AG04450 (cell line): ENCODE measurements at regions of chr21 and their contacts with region 1.

Region 1: DNA sequence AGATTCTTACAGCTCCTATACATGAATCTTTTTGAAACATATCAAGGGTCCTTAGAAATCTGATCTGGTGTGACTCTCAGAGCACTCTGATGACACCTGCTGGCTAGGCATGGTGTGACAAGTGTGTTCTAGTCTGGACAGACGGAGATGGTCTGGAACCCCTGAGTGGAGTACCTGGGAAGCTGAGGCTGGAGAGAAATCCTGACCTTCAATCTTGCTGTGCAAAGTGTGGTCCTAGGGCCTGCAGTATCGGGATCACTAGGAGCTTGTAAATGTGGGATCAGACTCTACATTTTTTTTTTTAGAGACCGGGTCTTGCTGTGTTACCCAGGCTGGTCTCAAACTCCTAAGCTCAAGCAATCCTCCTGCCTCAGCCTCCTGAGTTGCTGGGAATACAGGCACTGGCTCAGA is 78.6 kb upstream of the SOD1 start:
- DNase-seq: peak; percentile 24
- H3K4me3 ChIP-seq: no peak overlapping the region
- H3K27ac ChIP-seq: no peak overlapping the region
- H3K27me3 ChIP-seq: peaks cover 2% of the 10 kb centered on the region
- CTCF ChIP-seq: peak; percentile 90

Region 2: GRCh38 chr21:31180256-31181081 is 400.4 kb before region 1 on chr21:
- CTCF ChIA-PET with region 1: interaction called, 27 read pairs
- POLR2A ChIA-PET with region 1: no interaction called
- DNase-seq: no peak
- H3K4me3 ChIP-seq: no peak overlapping the region
- H3K27ac ChIP-seq: no peak overlapping the region
- H3K27me3 ChIP-seq: no peaks in the 10 kb centered on the region
- CTCF ChIP-seq: peak; percentile 72

Region 3: GRCh38 chr21:31213795-31214194 is 367.1 kb before region 1 on chr21:
- CTCF ChIA-PET with region 1: interaction called, 15 read pairs
- POLR2A ChIA-PET with region 1: no interaction called
- DNase-seq: no peak
- H3K4me3 ChIP-seq: no peak overlapping the region
- H3K27ac ChIP-seq: no peak overlapping the region
- H3K27me3 ChIP-seq: no peaks in the 10 kb centered on the region
- CTCF ChIP-seq: peak; percentile 23; the same call in 1 of the 2 replicates

Region 4: DNA sequence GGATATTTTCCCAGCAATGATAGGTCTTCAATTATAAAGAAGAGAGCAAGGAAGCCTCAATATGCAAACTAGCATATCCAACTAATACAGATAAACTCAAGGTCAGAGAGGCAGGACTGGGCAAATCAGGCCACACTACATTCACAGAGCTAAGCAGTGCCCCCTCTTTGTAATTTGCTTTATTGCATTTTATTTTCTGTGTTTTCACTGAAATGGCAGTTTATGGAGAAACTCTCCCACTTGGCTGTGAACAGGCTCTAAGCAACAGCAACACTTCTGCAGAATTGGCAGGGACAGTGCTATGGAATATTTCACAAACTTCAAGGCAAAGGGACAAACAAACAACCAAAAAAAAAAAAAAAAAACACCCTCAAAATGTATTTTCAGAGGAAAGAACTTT is 14.8 kb before region 1 on chr21:
- CTCF ChIA-PET with region 1: interaction called, 12 read pairs
- POLR2A ChIA-PET with region 1: no interaction called
- DNase-seq: no peak
- H3K4me3 ChIP-seq: no peak overlapping the region
- H3K27ac ChIP-seq: no peak overlapping the region
- H3K27me3 ChIP-seq: no peaks in the 10 kb centered on the region
- CTCF ChIP-seq: no peak

Region 5: GRCh38 chr21:31604591-31605190 is 23.8 kb after region 1 on chr21:
- CTCF ChIA-PET with region 1: interaction called, 21 read pairs
- POLR2A ChIA-PET with region 1: no interaction called
- DNase-seq: peak; percentile 20
- H3K4me3 ChIP-seq: no peak overlapping the region
- H3K27ac ChIP-seq: no peak overlapping the region
- H3K27me3 ChIP-seq: no peaks in the 10 kb centered on the region
- CTCF ChIP-seq: peak; percentile 86

Region 6: GRCh38 chr21:31798842-31799704 is 218.2 kb after region 1 on chr21:
- CTCF ChIA-PET with region 1: no interaction called
- POLR2A ChIA-PET with region 1: no interaction called
- DNase-seq: no peak
- H3K4me3 ChIP-seq: no peak overlapping the region
- H3K27ac ChIP-seq: no peak overlapping the region
- H3K27me3 ChIP-seq: no peaks in the 10 kb centered on the region
- CTCF ChIP-seq: no peak

Region 7: GRCh38 chr21:31900121-31900895 is 319.4 kb after region 1 on chr21:
- CTCF ChIA-PET with region 1: no interaction called
- POLR2A ChIA-PET with region 1: no interaction called
- DNase-seq: no peak
- H3K4me3 ChIP-seq: no peak overlapping the region
- H3K27ac ChIP-seq: no peak overlapping the region
- H3K27me3 ChIP-seq: no peaks in the 10 kb centered on the region
- CTCF ChIP-seq: no peak